ENCODE measurements at regions of chr18 and their contacts with region 1.

Region 1: GRCh38 chr18:74291771-74292540 is at the start of gene CYB5A:
- DNase-seq: peak; percentile 99 to 100
- ATAC-seq: peak; percentile 95 to 100 (median 96)
- H3K4me3 ChIP-seq: peak within 1 kb of the TSS; percentile 95
- H3K4me3 Mint-ChIP-seq: no peak within 1 kb of the TSS
- H3K27ac ChIP-seq: peak within 1 kb of the TSS; percentile 43
- H3K27ac Mint-ChIP-seq: peak within 1 kb of the TSS; percentile 85 to 95
- H3K4me1 ChIP-seq: peaks cover 13% of the 10 kb centered on the region
- H3K4me1 Mint-ChIP-seq: peaks cover 5 to 8% of the 10 kb centered on the region in 2 donors
- H3K27me3 ChIP-seq: no peaks in the 10 kb centered on the region
- H3K27me3 Mint-ChIP-seq: no peaks in the 10 kb centered on the region
- CTCF ChIP-seq: no peak
- total RNA-seq, gene CYB5A: 10.4 to 14.6 (median 13.0) TPM

Region 2: DNA sequence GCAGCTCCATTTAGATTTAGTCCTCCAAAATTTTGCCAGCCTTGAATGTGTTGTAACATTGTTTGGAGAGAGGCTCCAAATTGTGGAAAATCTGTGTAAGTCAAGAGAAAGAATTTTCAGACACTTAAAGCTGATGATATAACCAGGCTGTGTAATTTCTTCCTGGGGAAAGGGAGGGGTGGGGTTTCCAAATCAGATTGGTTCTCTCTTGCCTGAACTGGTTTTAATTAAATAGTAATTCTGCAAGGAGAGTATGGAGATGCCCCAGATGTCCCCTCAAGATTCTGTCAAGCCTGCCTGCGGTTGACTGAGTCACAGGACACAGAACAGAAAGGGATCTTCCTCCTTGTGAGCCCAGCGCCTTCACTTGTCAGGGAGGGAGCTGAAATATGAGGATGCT is 78.2 kb after region 1 on chr18:
- intact Hi-C with region 1: no loop called
- DNase-seq: no peak
- ATAC-seq: no peak
- H3K4me3 ChIP-seq: no peak overlapping the region
- H3K4me3 Mint-ChIP-seq: no peak overlapping the region
- H3K27ac ChIP-seq: no peak overlapping the region
- H3K27ac Mint-ChIP-seq: no peak overlapping the region
- H3K4me1 ChIP-seq: peaks cover 14% of the 10 kb centered on the region
- H3K4me1 Mint-ChIP-seq: peaks cover 0 to 9% of the 10 kb centered on the region in 2 donors
- H3K27me3 ChIP-seq: no peaks in the 10 kb centered on the region
- H3K27me3 Mint-ChIP-seq: peaks cover 15 to 19% of the 10 kb centered on the region in 2 donors
- CTCF ChIP-seq: no peak

Region 3: DNA sequence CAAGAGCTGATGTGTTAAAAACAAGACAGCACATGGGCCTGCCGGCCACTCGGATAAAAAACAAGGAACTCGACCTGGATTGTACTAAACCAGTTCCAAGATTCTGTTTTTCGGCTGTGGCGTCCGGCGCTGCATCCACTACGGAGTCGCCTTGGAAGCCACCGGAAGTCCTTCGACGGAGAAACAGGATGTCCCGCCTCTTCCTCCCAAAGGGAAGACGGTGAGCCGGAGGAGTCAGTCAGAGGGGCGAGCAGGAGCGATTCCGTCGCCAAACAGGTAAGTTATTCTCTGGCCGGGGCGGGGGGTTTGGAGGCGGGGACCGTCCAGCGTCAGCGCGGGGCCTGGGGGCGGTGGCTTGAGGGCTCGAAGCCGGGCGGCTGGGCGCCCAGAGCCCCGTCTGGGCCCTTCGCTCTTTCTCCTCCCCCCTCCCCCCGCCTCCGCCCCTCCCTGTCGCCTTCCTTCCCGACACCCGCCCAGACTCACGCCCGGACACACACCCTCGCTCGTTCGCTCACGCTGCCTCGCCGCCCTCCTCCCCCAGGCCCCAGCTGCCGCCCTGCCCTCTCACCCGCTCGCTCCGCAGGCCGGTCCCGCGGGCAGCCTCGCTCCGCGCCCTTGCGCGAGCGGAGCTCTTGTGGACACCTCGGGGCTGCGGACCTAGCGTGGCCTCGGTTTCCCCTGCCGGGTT is 305.9 kb after region 1 on chr18 and contains the start of gene ZNF407:
- intact Hi-C with region 1: loop called (anchors 1 kb)
- DNase-seq: peak; percentile 85 to 94
- ATAC-seq: peak; percentile 72 to 88 (median 78)
- H3K4me3 ChIP-seq: peak within 1 kb of the TSS; percentile 95
- H3K4me3 Mint-ChIP-seq: peak within 1 kb of the TSS; percentile 93
- H3K27ac ChIP-seq: peak within 1 kb of the TSS; percentile 96
- H3K27ac Mint-ChIP-seq: peak within 1 kb of the TSS; percentile 94 to 95
- H3K4me1 ChIP-seq: peaks cover 14% of the 10 kb centered on the region
- H3K4me1 Mint-ChIP-seq: peaks cover 58 to 65% of the 10 kb centered on the region in 2 donors
- H3K27me3 ChIP-seq: no peaks in the 10 kb centered on the region
- H3K27me3 Mint-ChIP-seq: no peaks in the 10 kb centered on the region
- CTCF ChIP-seq: no peak
- total RNA-seq, gene ZNF407: 28.4 to 36.7 (median 36.3) TPM

Region 4: DNA sequence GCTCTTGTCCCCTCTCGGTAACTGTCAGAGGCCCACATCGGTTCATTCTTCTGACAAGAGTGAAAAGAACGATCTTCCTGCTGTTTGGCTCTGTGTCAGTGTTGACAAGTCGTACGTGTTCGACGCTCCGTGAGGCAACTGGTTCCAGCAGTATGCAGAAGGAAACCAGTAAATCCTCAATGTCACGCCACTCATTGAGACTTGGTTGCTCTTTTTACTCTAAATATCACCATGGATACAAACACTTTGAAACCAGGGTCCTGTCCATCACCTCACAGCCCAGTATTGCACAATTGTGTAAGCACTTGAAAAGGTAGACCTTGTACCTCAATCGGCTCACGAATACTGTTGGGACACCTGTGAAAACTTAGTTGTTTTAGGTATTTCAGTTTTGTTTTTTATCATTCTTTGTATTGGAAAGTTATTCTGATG is 442.1 kb after region 1 on chr18:
- intact Hi-C with region 1: no loop called
- DNase-seq: no peak
- ATAC-seq: no peak
- H3K4me3 ChIP-seq: no peak overlapping the region
- H3K4me3 Mint-ChIP-seq: no peak overlapping the region
- H3K27ac ChIP-seq: no peak overlapping the region
- H3K27ac Mint-ChIP-seq: no peak overlapping the region
- H3K4me1 ChIP-seq: no peaks in the 10 kb centered on the region
- H3K4me1 Mint-ChIP-seq: peaks cover 0 to 22% of the 10 kb centered on the region in 2 donors
- H3K27me3 ChIP-seq: no peaks in the 10 kb centered on the region
- H3K27me3 Mint-ChIP-seq: no peaks in the 10 kb centered on the region
- CTCF ChIP-seq: no peak